ENCODE measurements at regions of chr4 and their contacts with region 1.

Region 1: DNA sequence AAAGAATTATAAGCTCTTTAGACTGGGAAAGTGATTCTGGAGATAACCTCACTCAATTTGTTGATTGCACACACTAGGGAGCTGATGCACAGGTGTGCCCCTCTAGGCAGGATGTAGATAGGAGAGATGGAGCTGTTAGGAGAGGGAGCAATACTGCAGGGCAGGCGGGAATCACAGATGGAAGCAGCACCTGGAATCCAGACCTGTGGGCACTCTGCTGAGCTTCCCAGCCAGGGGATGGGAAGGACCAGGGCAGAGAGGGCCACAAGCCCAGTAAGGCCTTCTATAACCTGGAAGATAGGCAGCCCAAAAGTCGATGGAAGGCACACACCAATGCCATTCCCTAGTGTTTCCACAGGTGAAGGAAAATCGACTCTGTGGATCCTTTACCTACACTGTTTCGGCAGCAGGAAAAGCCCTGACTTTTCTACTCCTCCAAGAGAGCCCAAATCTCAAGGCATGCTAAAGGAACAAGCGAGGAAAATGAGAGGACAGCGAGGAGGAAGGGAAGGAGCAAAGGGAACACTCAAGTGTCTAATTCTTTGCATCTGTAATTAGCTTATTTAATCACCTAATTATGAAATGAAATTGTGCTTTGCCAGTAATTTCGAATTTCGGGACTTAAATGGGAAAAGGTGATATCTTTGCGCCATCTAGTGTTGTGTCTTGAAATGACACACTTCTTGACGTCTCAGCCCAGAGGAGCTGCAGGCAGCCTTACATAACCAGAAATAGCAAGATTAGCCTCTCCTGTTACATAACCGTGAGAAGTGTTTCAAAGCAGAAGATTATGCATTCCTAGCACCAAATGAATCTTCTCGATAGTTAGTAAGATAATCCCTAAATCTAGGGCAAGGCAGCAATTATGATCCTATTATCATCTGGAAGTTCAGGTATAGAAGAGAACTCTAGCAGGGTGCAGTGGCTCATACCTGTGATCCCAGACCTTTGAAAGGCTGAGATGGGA is 31.0 kb upstream of the TLR3 start:
- DNase-seq: no peak
- ATAC-seq: peak; percentile 83
- H3K4me3 Mint-ChIP-seq: no peak overlapping the region
- H3K27ac Mint-ChIP-seq: 0 out of 2 replicates have a peak overlapping the region, but pooled peaks have one; percentile 60
- H3K4me1 Mint-ChIP-seq: peaks cover 9% of the 10 kb centered on the region; the same call in 1 of the 2 replicates
- H3K27me3 Mint-ChIP-seq: peaks cover 17% of the 10 kb centered on the region
- CTCF ChIP-seq: peak; percentile 81

Region 2: DNA sequence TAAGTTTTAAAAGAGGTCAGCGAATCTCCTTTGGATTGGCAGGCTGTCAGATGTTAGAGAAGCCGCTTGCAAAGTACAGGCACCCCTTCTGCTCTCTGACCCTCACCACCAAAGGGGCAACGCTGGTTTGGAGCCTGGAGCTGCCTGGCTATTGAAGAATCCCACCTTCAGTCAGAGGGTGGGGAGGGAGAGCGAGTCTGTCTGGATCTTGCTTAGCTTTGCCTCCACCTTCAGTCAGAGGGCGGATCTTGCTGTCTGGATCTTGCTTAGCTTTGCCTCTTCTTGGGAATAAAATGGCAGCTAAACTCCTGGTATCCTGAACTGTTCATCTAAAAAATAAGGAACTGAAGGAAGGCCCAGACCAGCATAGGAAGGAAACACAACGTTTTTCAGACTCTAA is 573.8 kb before region 1 on chr4:
- CTCF ChIA-PET with region 1: interaction called, 13 read pairs
- POLR2A ChIA-PET with region 1: no interaction called
- DNase-seq: peak; percentile 30
- ATAC-seq: peak; percentile 89
- H3K4me3 Mint-ChIP-seq: no peak overlapping the region
- H3K27ac Mint-ChIP-seq: no peak overlapping the region
- H3K4me1 Mint-ChIP-seq: peaks cover 22% of the 10 kb centered on the region
- H3K27me3 Mint-ChIP-seq: peaks cover 19% of the 10 kb centered on the region
- CTCF ChIP-seq: no peak

Region 3: DNA sequence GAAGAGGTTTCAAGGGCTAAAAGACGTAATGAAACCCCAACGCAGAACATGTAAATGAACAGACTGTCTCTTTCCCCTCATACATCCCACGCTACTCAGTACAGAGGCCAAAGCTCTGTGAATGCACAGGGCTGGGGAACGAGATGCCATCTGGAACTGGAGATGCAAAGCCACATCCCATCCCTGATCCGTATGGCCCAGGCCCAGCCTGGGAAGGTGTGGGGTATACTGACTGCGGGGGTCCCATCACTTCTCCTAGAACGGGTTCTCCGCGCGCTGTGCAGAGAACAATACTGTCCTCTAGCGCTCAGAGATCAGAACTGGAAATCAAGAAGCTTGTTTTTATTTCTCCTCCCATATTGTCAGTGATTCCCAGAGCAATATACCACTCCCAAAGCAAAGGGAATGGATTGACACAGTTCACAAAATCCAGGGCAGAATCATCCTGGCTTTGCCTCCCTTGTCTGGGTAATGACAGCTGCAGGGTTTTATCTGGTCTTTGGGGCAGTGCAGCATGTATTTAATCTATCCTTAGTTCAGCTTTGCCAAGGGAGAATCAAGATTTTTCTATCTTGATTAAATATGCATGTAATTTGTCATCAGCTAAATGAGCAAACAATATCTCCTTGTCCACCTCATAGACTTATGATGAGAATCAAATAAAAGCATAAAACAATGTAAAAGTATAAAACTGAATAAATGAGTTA is 16.4 kb before region 1 on chr4:
- CTCF ChIA-PET with region 1: interaction called, 32 read pairs
- POLR2A ChIA-PET with region 1: no interaction called
- DNase-seq: peak; percentile 73
- ATAC-seq: peak; percentile 97
- H3K4me3 Mint-ChIP-seq: no peak overlapping the region
- H3K27ac Mint-ChIP-seq: no peak overlapping the region
- H3K4me1 Mint-ChIP-seq: peaks cover 35% of the 10 kb centered on the region
- H3K27me3 Mint-ChIP-seq: peaks cover 7% of the 10 kb centered on the region
- CTCF ChIP-seq: peak; percentile 58

Region 4: GRCh38 chr4:186095406-186095805 is 57.4 kb after region 1 on chr4:
- CTCF ChIA-PET with region 1: no interaction called
- POLR2A ChIA-PET with region 1: no interaction called
- DNase-seq: no peak
- ATAC-seq: peak; percentile 69
- H3K4me3 Mint-ChIP-seq: no peak overlapping the region
- H3K27ac Mint-ChIP-seq: no peak overlapping the region
- H3K4me1 Mint-ChIP-seq: peaks cover 15% of the 10 kb centered on the region
- H3K27me3 Mint-ChIP-seq: no peaks in the 10 kb centered on the region
- CTCF ChIP-seq: no peak

Region 5: GRCh38 chr4:186449954-186450353 is 412.0 kb after region 1 on chr4:
- CTCF ChIA-PET with region 1: no interaction called
- POLR2A ChIA-PET with region 1: no interaction called
- DNase-seq: no peak
- ATAC-seq: no peak
- H3K4me3 Mint-ChIP-seq: no peak overlapping the region
- H3K27ac Mint-ChIP-seq: no peak overlapping the region
- H3K4me1 Mint-ChIP-seq: no peaks in the 10 kb centered on the region
- H3K27me3 Mint-ChIP-seq: no peaks in the 10 kb centered on the region; the same call in 1 of the 2 replicates
- CTCF ChIP-seq: no peak